WTC11 (cell line): ENCODE measurements at regions of chr1 and their contacts with region 1.

Region 1: DNA sequence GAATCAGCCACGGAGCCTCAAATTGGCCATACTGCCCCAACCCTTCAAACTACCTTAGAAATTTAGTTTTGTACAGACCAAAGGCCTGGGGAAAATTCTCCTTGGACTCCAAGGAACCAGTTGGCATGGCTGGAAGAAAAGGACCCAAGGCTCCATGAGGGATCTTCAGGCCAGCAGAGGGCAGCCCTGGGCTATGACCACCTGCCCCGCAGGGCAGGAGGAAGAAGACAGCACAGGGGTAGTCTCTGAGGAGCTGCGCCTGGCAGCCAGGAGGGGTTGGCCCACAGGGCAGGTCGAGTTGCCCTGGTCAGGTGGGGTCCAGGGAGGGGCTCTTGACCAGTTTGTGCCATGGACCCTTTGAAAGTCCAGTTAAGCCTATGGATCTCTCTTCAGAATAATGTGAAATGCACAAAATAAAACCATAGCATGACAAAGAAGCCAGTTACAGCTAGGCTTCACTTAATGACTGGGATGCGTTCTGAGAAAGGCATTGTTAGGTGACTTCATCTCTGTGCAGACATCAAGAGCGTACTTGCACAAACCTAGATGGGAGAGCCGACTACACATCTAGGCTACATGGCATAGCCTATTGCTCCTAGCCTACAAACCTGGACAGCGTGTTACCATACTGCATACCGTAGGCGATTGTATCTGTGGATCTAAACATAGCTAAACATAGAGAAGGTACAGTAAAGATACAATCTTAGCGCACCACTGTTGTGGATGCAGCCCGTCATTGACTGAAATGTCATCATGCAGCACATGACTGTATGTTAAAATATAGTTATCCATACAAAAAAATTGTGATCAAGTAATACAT is 26.1 kb downstream of the CACNA1S start:
- DNase-seq: peak; percentile 76
- ATAC-seq: peak; percentile 97
- H3K4me3 Mint-ChIP-seq: no peak overlapping the region
- H3K27ac Mint-ChIP-seq: no peak overlapping the region
- H3K4me1 Mint-ChIP-seq: peaks cover 6% of the 10 kb centered on the region; the same call in 1 of the 2 replicates
- H3K27me3 Mint-ChIP-seq: no peaks in the 10 kb centered on the region
- CTCF ChIP-seq: peak; percentile 35; the same call in 1 of the 2 replicates

Region 2: DNA sequence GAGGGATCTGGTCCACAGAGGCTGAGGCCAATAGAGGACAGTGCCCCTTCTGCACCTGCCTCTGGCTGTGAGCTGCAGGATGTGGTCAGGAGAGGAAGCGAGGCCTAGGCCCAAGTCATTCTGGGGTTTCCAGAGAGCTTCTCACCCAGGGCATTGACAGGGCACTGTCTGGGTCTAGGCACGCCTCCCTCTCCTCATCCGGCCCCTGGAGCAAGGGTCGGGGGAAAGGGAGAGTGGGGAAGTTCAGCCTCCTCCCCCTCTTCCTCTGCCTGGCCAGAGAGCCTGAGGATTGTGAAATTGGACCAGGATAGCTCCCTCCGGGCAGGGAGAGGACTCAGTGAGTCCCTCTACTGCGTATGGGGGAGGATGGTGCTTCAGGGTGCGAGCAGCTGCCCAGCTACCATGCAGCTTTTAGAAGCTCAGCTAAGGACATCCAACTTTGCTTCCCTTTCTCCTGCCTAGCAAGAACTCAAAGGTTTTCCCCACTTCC is 197.7 kb before region 1 on chr1:
- CTCF ChIA-PET with region 1: no interaction called
- POLR2A ChIA-PET with region 1: no interaction called
- DNase-seq: no peak
- ATAC-seq: peak; percentile 10
- H3K4me3 Mint-ChIP-seq: no peak overlapping the region
- H3K27ac Mint-ChIP-seq: no peak overlapping the region
- H3K4me1 Mint-ChIP-seq: peaks cover 52% of the 10 kb centered on the region
- H3K27me3 Mint-ChIP-seq: peaks cover 3% of the 10 kb centered on the region; the same call in 1 of the 2 replicates
- CTCF ChIP-seq: no peak

Region 3: GRCh38 chr1:201108614-201109013 is 22.5 kb after region 1 on chr1:
- CTCF ChIA-PET with region 1: interaction called, 124 read pairs
- POLR2A ChIA-PET with region 1: interaction called, 4 read pairs
- DNase-seq: no peak
- ATAC-seq: peak; percentile 32
- H3K4me3 Mint-ChIP-seq: no peak overlapping the region
- H3K27ac Mint-ChIP-seq: no peak overlapping the region
- H3K4me1 Mint-ChIP-seq: peaks cover 10% of the 10 kb centered on the region
- H3K27me3 Mint-ChIP-seq: peaks cover 12% of the 10 kb centered on the region
- CTCF ChIP-seq: no peak

Region 4: DNA sequence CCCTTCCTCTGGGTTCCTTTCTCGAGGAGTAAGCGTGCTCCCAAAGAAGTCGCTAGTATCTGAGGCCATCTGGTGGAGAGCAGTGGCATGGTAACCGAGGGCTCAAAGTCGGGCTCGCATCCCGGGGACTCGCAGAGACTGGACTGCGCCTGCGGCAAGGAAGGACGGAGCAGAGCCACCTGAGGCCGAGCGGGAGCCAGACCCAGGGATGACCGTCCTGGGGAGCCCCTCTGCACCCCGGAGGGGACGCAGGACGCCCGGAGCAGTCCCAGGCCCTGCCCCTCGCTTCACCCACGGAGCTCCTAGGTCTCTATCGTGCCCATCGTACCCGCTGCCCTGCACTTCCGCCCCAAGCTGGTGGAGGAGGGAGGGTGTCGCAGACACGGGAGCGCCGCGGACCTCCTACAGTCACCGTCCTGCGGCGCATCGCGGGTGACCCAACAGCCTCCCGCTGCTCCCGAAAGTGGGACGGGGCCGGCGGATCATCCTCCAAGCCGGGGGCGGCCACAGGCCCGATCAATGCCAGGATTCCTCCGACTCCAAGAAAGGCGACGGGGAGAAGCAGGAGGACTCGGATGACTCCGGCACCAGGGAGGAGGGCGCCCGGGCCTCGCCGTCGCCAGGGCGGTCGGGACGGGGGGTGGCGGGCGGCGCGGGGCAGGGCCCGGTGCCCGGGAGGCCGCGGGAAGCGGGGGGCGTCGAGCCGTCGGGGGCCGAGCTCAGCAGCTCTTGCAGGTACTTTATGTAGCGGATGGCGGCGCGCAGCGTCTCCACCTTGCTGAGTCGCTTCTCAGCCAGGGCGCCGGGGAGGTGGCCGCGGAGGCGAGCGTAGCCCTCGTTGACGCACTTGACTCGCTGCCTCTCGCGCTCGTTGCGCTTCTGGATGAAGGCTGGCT is 28.4 kb after region 1 on chr1:
- CTCF ChIA-PET with region 1: interaction called, 124 read pairs
- POLR2A ChIA-PET with region 1: interaction called, 4 read pairs
- DNase-seq: peak; percentile 95
- ATAC-seq: peak; percentile 92
- H3K4me3 Mint-ChIP-seq: peak overlapping the region; percentile 73
- H3K27ac Mint-ChIP-seq: no peak overlapping the region
- H3K4me1 Mint-ChIP-seq: peaks cover 8% of the 10 kb centered on the region
- H3K27me3 Mint-ChIP-seq: peaks cover 62% of the 10 kb centered on the region
- CTCF ChIP-seq: peak; percentile 65

Region 5: DNA sequence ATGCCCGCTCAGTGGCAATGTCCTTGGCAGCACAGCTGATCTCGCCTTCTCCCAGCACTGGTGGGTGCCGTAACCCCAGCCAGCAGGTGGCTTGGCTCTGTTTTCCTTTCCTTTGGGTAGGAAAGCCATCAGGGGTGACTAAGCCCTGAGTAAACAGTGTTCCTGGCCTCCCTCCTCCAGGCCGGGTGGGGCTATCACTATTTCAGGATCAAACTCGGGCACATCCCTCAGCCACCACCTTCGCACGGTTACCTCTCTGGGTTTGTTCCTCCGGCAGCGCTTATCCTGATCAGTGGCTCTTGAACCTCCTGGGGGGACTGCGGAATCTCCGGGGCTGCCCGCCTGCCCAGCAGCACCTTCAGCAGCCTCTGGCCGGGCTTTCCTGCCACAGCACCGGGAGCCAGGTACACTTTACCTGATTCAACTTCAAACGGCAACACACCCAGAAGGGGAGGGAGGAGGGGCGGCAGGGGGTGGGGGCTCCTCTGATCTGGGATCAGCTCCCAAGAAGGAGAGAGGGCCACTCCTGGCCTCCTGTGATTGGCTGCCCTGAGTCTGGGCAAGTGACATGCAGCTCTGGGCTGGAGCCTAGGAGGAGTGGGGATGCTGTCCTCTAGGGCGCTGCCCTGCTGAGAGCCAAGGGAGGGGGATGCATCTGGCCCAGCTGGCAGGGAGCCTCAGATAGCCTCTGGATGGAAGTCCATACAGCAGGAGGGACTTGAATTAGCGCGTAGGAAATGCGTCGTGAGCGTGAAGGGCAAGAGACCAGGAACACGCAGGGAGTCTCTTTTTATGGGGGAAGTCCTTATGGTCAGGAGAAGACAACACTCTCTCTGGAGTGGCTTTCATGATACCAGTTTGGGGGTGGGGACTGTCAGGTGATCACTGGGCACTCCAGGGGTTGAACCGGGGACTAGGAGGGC is 41.0 kb after region 1 on chr1 and contains the start of gene ASCL5:
- CTCF ChIA-PET with region 1: interaction called, 10 read pairs
- POLR2A ChIA-PET with region 1: no interaction called
- DNase-seq: peak; percentile 57
- ATAC-seq: peak; percentile 92
- H3K4me3 Mint-ChIP-seq: no peak within 1 kb of the TSS
- H3K27ac Mint-ChIP-seq: no peak within 1 kb of the TSS
- H3K4me1 Mint-ChIP-seq: peaks cover 10% of the 10 kb centered on the region
- H3K27me3 Mint-ChIP-seq: peaks cover 2% of the 10 kb centered on the region; the same call in 1 of the 2 replicates
- CTCF ChIP-seq: no peak
- total RNA-seq, gene ASCL5: 0.18 to 0.53 TPM (median 0.31 TPM) in 3 replicates

Region 6: DNA sequence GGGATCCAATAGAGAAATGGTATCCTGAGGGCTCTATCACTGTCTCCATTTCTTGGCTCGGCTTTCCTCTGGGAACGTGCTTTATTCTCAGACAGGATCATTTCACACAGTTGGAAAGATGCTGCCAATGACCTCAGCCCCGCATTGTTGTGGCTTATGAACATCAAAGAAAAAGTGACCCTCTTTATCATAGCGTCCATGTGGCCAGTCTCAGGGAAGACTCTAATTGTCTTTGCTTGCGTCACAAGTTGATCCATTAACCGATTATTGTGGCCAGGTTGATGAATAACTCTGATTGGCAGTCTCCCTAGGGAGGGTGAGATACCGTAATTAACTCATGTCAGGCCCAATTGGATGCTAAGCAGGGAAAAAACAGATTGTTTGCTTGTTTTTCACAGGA is 78.5 kb after region 1 on chr1:
- CTCF ChIA-PET with region 1: no interaction called
- POLR2A ChIA-PET with region 1: no interaction called
- DNase-seq: no peak
- ATAC-seq: no peak
- H3K4me3 Mint-ChIP-seq: no peak overlapping the region
- H3K27ac Mint-ChIP-seq: no peak overlapping the region
- H3K4me1 Mint-ChIP-seq: no peaks in the 10 kb centered on the region; the same call in 1 of the 2 replicates
- H3K27me3 Mint-ChIP-seq: peaks cover 11% of the 10 kb centered on the region
- CTCF ChIP-seq: no peak

Region 7: GRCh38 chr1:201191653-201192260 is 105.6 kb after region 1 on chr1:
- CTCF ChIA-PET with region 1: no interaction called
- POLR2A ChIA-PET with region 1: no interaction called
- DNase-seq: no peak
- ATAC-seq: no peak
- H3K4me3 Mint-ChIP-seq: no peak overlapping the region
- H3K27ac Mint-ChIP-seq: no peak overlapping the region
- H3K4me1 Mint-ChIP-seq: peaks cover 6% of the 10 kb centered on the region
- H3K27me3 Mint-ChIP-seq: peaks cover 6% of the 10 kb centered on the region
- CTCF ChIP-seq: no peak

Region 8: GRCh38 chr1:201329286-201329685 is 243.2 kb after region 1 on chr1:
- CTCF ChIA-PET with region 1: no interaction called
- POLR2A ChIA-PET with region 1: no interaction called
- DNase-seq: no peak
- ATAC-seq: no peak
- H3K4me3 Mint-ChIP-seq: no peak overlapping the region
- H3K27ac Mint-ChIP-seq: no peak overlapping the region
- H3K4me1 Mint-ChIP-seq: no peaks in the 10 kb centered on the region
- H3K27me3 Mint-ChIP-seq: no peaks in the 10 kb centered on the region; the same call in 1 of the 2 replicates
- CTCF ChIP-seq: no peak